Tibial artery (tissue), 4 donors: ENCODE measurements at regions of chr20 and their contacts with region 1.

Region 1: GRCh38 chr20:753136-753535 is 15.2 kb downstream of the SLC52A3 start:
- DNase-seq: no peak
- H3K4me3 ChIP-seq: no peak overlapping the region
- H3K27ac ChIP-seq: no peak overlapping the region
- H3K4me1 ChIP-seq: no peaks in the 10 kb centered on the region
- H3K27me3 ChIP-seq: no peaks in the 10 kb centered on the region
- CTCF ChIP-seq: no peak

Region 2: DNA sequence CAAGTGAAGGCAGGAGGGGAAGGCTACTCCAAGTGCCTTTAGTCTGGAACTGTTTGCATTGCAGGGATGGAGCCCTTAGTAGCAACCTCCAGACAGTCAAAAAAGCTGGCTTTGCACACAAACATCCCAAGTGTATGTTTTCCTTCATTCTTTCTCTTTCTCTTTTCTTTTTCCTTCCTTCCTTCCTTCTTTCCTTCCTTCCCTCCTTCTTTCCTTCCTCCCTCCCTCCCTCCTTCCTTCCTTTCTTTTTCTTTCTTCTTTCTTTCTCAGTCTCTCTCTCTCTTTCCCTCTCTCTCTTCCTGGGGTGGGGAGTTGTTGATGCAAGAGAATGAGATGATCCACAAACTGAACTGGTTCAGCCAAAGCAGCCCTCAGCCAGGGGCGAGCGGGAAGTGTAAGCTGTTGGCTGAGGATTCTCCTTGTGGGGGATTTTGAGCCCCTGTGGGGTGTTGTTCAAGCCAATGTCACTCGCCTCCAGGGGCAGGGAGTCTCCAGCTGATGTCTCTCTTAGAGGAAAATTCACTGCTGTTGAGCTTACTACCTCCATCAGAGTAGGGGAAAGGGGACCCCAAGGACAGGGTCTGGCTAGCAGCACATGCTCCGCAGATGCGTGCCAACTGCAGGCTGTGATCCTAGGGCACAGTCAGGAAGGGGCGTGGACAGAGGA is 237.3 kb after region 1 on chr20:
- intact Hi-C with region 1: loop called (anchors 1 kb)
- DNase-seq: no peak
- H3K4me3 ChIP-seq: no peak overlapping the region
- H3K27ac ChIP-seq: no peak overlapping the region
- H3K4me1 ChIP-seq: no peaks in the 10 kb centered on the region
- H3K27me3 ChIP-seq: peaks cover 0 to 29% of the 10 kb centered on the region in 2 donors
- CTCF ChIP-seq: no peak